BJ (cell line): ENCODE measurements at regions of chr19 and their contacts with region 1.

Region 1: DNA sequence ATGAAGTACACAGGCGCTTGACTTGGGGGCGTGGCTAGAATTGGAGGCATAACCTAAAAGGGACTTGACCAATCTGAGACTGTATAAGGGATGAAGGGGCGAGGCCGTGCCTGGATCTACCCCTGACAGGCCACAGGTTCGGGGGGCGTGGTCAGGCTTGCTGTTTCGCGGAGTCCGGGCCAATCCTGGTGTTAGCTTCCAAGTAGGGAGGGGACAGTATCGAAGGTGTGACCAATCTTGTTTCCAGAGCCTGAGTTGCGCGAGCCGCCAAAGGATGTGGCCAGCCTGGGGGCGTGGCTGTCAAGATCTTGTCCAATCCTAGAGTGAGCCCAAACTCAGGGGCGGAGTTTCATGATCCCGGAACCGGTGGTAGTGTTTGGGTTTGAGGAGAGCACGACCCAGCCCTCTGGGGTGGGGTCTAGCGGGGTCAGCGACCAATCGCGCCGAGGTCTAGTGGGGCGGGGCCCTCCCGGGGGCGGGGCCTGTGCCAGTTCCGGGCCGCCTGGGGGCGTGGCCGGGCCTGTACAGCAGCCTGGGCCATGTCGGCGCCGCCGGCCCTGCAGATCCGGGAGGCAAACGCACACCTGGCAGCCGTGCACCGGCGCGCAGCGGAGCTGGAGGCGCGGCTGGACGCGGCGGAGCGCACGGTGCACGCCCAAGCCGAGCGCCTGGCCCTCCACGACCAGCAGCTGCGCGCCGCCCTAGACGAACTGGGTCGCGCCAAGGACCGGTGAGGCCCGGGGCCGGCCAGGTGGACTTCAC is at the start of gene VMAC:
- DNase-seq: peak; percentile 100
- H3K4me3 ChIP-seq: peak within 1 kb of the TSS; percentile 100
- H3K27me3 ChIP-seq: no peaks in the 10 kb centered on the region
- CTCF ChIP-seq: no peak
- polyA plus RNA-seq, gene VMAC: 3.3 and 4.2 TPM in 2 replicates

Region 2: GRCh38 chr19:5814852-5815246 is 89.7 kb before region 1 on chr19:
- CTCF ChIA-PET with region 1: no interaction called
- POLR2A ChIA-PET with region 1: no interaction called
- DNase-seq: no peak
- H3K4me3 ChIP-seq: no peak overlapping the region
- H3K27me3 ChIP-seq: peaks cover 3% of the 10 kb centered on the region; the same call in 1 of the 2 replicates
- CTCF ChIP-seq: no peak

Region 3: GRCh38 chr19:5891938-5892771 is 12.4 kb before region 1 on chr19:
- CTCF ChIA-PET with region 1: interaction called, 21 read pairs
- POLR2A ChIA-PET with region 1: no interaction called
- DNase-seq: no peak
- H3K4me3 ChIP-seq: no peak overlapping the region
- H3K27me3 ChIP-seq: no peaks in the 10 kb centered on the region
- CTCF ChIP-seq: peak; percentile 91